Activated T-helper 1 cell treated with anti-CD3 and anti-CD28 coated beads, Interleukin-12 subunit alpha, Interleukin-12 subunit beta, Interleukin-2, Interleukin-4 antibody, amounts not matched to agents 30 ng/mL and 10 ng/mL and 1 ng/mL, durations not matched to agents 14 hours and 24 hours and 36 hours (primary cell): ENCODE measurements at regions of chr9 and their contacts with region 1.

Region 1: DNA sequence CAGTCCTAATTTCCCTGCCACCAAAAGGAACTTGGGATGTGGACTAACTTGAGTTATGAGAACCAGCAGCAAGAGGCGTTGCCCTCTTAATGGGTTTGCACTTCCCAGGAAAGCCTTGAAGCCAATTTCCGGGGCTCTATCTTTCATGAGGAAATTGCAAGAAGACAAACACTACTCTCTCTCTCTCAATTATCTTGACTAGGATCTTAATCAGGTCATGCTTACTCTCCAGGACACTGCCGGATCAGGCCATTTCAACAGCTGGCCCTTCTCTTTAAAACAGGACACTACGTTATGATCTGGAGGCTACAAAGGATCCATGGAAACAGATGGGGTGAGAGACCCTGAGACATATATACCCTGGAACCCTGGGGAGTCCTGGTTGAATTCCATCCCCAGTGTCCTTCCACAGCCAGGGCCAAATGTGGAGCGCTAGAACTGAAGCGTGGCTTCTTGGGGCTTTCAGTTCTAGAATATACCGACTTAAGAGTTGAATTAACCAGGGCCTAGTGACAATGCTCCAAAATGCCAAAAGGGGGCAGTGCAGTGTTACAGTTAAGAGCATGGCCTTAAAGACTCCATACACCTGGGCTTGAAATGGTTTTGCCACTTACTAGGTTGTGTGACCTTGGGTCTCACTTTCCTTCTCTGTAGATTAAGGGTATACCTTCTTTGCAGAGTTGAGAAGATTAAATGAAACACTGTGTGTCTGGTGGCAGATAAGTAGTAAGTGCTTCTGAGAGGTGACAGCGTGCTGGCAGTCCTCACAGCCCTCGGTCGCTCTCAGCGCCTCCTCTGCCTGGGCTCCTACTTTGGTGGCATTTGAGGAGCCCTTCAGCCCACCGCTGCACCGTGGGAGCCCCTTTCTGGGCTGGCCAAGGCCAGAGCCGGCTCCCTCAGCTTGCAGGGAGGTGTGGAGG is 21.1 kb downstream of the FAM219A start:
- DNase-seq: peak; percentile 50
- H3K4me3 Mint-ChIP-seq: no peak overlapping the region
- H3K27ac Mint-ChIP-seq: no peak overlapping the region
- H3K4me1 Mint-ChIP-seq: peaks cover 6% of the 10 kb centered on the region
- H3K27me3 Mint-ChIP-seq: no peaks in the 10 kb centered on the region

Region 2: DNA sequence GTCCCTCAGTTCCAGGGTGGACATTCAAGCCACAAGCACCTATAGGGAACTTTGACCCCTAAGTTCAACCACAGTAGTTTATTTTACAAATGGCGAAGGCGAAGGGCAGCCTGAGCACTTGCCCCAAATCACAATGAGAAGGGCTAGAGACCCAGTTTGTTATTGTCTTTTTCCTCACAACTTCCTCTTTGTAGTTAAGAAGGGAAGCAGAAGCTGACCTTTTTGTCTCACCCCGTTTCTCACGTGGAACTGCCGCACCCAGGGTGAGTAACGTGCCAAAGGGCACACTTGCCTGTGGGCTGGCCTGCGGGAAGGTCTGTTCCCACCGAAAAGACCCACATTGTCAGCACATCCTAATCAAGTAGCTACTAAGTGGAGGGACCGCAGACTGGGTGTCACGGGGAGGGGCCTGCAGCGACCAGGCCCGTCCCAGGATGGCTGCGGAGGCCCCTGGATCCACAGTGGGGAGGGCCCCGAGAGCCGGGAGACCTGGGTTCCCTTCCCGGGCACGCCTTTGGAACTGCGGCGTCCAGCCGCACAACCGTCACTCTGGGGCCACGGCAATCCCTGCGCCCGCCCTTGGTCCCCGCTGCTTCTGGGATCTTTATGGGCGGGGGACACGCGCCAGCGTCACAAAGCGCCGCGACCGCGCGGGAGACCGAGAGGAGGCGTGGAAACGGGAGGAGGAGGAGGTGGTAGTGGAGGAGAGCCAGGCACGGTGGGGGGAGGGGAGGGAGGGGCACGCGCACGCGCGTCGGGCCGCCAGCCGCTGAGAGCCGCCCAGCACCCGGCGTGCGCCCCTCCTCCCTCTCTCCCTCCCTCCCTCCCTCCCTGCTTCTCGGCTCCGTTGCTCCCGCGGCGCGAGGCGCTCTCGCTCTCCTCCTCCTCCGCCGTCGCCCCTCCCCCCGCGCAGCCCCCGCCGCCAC is 620.7 kb before region 1 on chr9 and contains the start of gene UBE2R2:
- intact Hi-C with region 1: no loop called
- DNase-seq: peak; percentile 90
- H3K4me3 Mint-ChIP-seq: peak within 1 kb of the TSS; percentile 93
- H3K27ac Mint-ChIP-seq: peak within 1 kb of the TSS; percentile 98
- H3K4me1 Mint-ChIP-seq: peaks cover 56% of the 10 kb centered on the region
- H3K27me3 Mint-ChIP-seq: peaks cover 5% of the 10 kb centered on the region
- total RNA-seq, gene UBE2R2: 40.0 and 41.0 TPM in 2 replicates

Region 3: GRCh38 chr9:34546834-34547827 is 109.9 kb after region 1 on chr9:
- intact Hi-C with region 1: loop called (anchors 1 kb)
- DNase-seq: no peak
- H3K4me3 Mint-ChIP-seq: no peak overlapping the region
- H3K27ac Mint-ChIP-seq: no peak overlapping the region
- H3K4me1 Mint-ChIP-seq: no peaks in the 10 kb centered on the region
- H3K27me3 Mint-ChIP-seq: peaks cover 14% of the 10 kb centered on the region

Region 4: GRCh38 chr9:34559624-34560452 is 122.6 kb after region 1 on chr9:
- intact Hi-C with region 1: no loop called
- DNase-seq: no peak
- H3K4me3 Mint-ChIP-seq: no peak overlapping the region
- H3K27ac Mint-ChIP-seq: no peak overlapping the region
- H3K4me1 Mint-ChIP-seq: no peaks in the 10 kb centered on the region
- H3K27me3 Mint-ChIP-seq: peaks cover 6% of the 10 kb centered on the region

Region 5: DNA sequence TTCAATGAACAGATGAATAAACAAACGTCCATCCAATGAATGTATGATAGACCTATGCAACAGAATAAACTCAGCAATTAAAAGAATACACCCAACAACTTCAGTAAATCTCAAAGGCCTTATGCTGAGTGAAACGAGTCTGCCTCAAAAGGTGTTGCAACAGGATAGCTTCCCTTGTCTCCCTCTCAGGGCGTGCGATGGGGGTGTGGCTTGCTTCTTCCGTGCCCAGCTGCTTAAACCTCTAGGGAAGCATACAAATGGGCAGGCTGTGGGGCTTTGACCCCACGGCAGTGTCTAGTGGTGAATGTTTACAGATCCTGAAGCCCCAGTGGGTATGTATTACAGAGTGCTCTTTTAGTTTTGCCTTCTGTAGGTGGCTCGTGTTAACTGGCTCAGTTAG is 359.7 kb after region 1 on chr9:
- intact Hi-C with region 1: no loop called
- DNase-seq: no peak
- H3K4me3 Mint-ChIP-seq: no peak overlapping the region
- H3K27ac Mint-ChIP-seq: no peak overlapping the region
- H3K4me1 Mint-ChIP-seq: no peaks in the 10 kb centered on the region
- H3K27me3 Mint-ChIP-seq: peaks cover 8% of the 10 kb centered on the region